Dendritic cell treated with granulocyte-macrophage colony-stimulating factor and Interleukin-4, amounts not matched to agents 40 ng/mL and 50 ng/mL, for 4 days (primary cell): ENCODE measurements at regions of chr14 and their contacts with region 1.

Region 1: GRCh38 chr14:51219473-51220448 is 20.3 kb upstream of the TMX1 start:
- H3K4me3 Mint-ChIP-seq: no peak overlapping the region
- H3K27ac Mint-ChIP-seq: no peak overlapping the region
- H3K4me1 Mint-ChIP-seq: peaks cover 8% of the 10 kb centered on the region
- H3K27me3 Mint-ChIP-seq: no peaks in the 10 kb centered on the region

Region 2: GRCh38 chr14:50954811-50955372 is 264.9 kb before region 1 on chr14:
- intact Hi-C with region 1: loop called (anchors 2 kb)
- H3K4me3 Mint-ChIP-seq: no peak overlapping the region
- H3K27ac Mint-ChIP-seq: peak overlapping the region; percentile 79
- H3K4me1 Mint-ChIP-seq: peaks cover 42% of the 10 kb centered on the region
- H3K27me3 Mint-ChIP-seq: no peaks in the 10 kb centered on the region